IMR-90 (cell line): ENCODE measurements at regions of chr10 and their contacts with region 1.

Region 1: GRCh38 chr10:103759100-103759781 is 96.1 kb downstream of the SH3PXD2A start:
- DNase-seq: peak; percentile 91
- ATAC-seq: peak; percentile 82
- H3K4me3 ChIP-seq: no peak overlapping the region
- H3K27ac ChIP-seq: peak overlapping the region; percentile 54
- H3K4me1 ChIP-seq: peaks cover 38% of the 10 kb centered on the region
- H3K27me3 ChIP-seq: no peaks in the 10 kb centered on the region
- CTCF ChIP-seq: no peak; the same call in 1 of the 2 replicates
- POLR2A ChIP-seq: peak; percentile 15; the same call in 1 of the 2 replicates
- RAD21 ChIP-seq: peak; percentile 26; the same call in 1 of the 2 replicates

Region 2: DNA sequence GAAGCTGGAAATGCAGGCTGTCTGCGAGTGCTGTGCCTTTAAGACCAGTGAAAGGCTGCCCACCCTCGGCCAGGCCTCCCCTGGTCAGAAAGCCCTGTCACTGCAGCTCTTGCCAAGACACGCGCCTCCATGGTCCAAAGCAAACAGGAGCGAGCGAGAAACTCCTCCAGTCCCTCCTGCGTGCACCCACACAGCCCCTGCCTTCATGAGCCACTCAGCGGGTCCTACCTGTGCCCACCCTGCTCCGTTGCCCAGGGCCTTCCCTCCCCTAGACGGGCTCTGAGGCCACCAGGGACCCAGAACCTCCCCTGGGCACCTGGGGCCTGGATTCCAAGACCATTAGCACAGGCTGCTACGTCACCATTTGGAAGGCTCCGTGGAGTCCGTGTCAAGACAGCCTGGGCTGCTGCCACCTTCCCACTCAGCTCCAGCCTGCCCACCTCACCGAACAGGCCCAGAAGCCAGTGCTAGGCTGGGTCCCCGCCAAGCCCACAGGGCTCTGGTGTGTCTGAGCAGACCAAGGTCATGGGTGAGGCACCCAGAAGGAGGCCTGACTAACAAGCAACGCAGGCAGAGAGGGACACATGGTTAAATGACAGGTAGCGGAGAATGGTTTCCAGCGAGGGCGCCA is 121.2 kb before region 1 on chr10:
- CTCF ChIA-PET with region 1: no interaction called
- POLR2A ChIA-PET with region 1: no interaction called
- dilution Hi-C with region 1: no loop called
- in situ Hi-C with region 1: no loop called
- intact Hi-C with region 1: no loop called
- DNase-seq: peak; percentile 92
- ATAC-seq: peak; percentile 69
- H3K4me3 ChIP-seq: no peak overlapping the region
- H3K27ac ChIP-seq: peak overlapping the region; percentile 40
- H3K4me1 ChIP-seq: peaks cover 23% of the 10 kb centered on the region
- H3K27me3 ChIP-seq: no peaks in the 10 kb centered on the region
- CTCF ChIP-seq: no peak
- POLR2A ChIP-seq: no peak
- RAD21 ChIP-seq: no peak

Region 3: DNA sequence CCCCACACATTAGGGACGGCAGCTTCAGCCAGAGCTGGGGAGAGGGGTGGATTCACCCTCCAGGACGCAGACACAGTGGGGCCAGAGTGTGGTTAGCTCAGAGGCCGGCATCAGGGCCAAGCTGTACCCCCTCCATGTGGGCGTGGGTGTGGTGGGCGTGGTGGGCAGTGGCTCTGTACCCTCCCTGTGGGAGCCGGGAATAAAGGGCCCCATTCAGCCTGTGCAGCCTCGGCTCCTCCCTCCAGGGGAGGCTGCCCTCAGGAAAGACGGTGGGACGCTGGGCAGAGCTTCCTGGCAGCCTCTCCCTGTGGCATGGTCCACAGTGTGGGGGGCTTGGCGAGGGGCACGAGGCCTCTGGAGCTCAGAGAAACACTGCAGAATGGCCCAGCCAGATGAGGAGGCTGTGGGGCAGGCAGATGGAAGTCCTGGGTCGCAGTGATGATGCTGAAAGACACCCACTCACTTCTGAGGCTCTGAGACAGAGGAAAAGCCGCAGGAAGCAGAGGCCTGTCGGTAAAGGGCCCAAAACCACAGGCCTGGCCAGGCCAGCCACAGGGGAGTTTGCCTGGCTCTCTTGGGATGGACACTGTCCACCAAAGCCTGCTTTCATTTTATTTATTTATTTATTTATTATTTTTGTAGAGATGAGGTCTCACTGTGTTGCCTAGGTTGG is 11.9 kb before region 1 on chr10:
- CTCF ChIA-PET with region 1: no interaction called
- POLR2A ChIA-PET with region 1: no interaction called
- dilution Hi-C with region 1: no loop called
- in situ Hi-C with region 1: no loop called
- intact Hi-C with region 1: loop called (anchors 1 kb)
- DNase-seq: peak; percentile 37
- ATAC-seq: no peak
- H3K4me3 ChIP-seq: no peak overlapping the region
- H3K27ac ChIP-seq: no peak overlapping the region
- H3K4me1 ChIP-seq: peaks cover 6% of the 10 kb centered on the region; the same call in 1 of the 2 replicates
- H3K27me3 ChIP-seq: no peaks in the 10 kb centered on the region
- CTCF ChIP-seq: no peak
- POLR2A ChIP-seq: no peak
- RAD21 ChIP-seq: no peak